AG04450 (cell line): ENCODE measurements at regions of chr11 and their contacts with region 1.

Region 1: DNA sequence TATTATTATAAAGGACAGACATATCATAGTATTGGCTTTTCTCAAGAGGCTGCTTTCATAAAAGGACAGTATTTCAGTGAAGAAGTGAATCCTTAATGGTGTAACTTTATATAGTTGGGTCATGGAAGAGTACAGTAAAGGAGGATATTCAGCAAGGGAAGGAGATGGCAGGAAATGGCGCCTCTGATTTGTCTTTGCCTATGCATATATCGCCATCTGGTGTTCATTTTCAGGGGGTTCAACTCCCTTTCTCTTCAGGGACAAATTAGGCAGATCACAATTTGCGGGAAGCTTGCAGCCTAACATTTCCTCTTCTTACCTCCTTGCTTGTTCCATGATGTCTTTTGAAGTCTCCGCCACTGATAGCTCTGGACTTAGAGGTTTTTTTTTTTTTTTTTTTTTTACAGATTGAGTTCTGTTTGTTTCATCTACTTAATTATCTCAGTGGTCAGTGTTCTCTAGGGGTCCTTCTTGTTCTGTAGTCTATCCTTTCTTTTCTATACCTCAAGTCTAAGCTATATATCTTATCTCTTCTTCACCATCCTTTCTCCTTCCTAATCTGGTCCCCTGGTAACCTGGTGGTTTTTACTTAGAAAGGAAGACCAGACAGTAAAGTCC is 21.8 kb upstream of the RRM1 start:
- DNase-seq: peak; percentile 52
- H3K4me3 ChIP-seq: no peak overlapping the region
- H3K27ac ChIP-seq: no peak overlapping the region
- H3K27me3 ChIP-seq: no peaks in the 10 kb centered on the region
- CTCF ChIP-seq: peak; percentile 91

Region 2: DNA sequence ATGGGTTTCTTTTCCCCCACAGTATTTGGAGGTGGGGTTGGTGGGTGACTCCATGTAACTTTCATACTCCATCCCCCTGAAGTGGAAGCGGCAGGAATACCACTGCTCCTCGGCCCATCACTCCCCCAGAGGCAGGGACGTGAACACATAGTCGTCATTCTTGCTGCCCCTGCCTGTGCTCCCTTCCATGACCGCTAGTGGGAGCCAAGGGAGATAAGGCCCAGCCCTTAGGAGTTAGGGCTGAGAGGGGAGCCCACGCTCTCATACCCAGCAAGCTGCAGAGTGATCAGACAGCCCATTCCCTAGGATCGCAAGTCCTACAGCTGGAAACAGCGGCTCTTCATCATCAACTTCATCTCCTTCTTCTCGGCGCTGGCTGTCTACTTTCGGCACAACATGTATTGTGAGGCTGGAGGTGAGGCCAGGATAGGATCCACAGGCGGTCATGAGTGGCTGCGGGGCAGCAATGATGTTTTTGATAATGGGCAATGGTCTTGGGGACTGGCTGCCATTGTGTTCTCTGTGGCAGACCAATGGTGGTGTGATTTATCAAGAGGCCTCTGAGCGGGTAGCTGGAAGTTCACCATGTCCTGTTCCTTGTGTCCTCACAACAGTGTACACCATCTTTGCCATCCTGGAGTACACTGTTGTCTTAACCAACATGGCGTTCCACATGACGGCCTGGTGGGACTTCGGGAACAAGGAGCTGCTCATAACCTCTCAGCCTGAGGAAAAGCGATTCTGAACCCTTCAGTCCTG is 247.9 kb before region 1 on chr11:
- CTCF ChIA-PET with region 1: interaction called, 15 read pairs
- POLR2A ChIA-PET with region 1: no interaction called
- DNase-seq: no peak
- H3K4me3 ChIP-seq: no peak overlapping the region
- H3K27ac ChIP-seq: peak overlapping the region; percentile 11
- H3K27me3 ChIP-seq: no peaks in the 10 kb centered on the region
- CTCF ChIP-seq: peak; percentile 53

Region 3: GRCh38 chr11:3873712-3874349 is 198.9 kb before region 1 on chr11:
- CTCF ChIA-PET with region 1: interaction called, 29 read pairs
- POLR2A ChIA-PET with region 1: no interaction called
- DNase-seq: no peak
- H3K4me3 ChIP-seq: no peak overlapping the region
- H3K27ac ChIP-seq: no peak overlapping the region
- H3K27me3 ChIP-seq: no peaks in the 10 kb centered on the region
- CTCF ChIP-seq: no peak

Region 4: GRCh38 chr11:3971756-3972404 is 100.9 kb before region 1 on chr11:
- CTCF ChIA-PET with region 1: interaction called, 14 read pairs
- POLR2A ChIA-PET with region 1: no interaction called
- DNase-seq: no peak
- H3K4me3 ChIP-seq: no peak overlapping the region
- H3K27ac ChIP-seq: no peak overlapping the region
- H3K27me3 ChIP-seq: no peaks in the 10 kb centered on the region
- CTCF ChIP-seq: peak; percentile 33

Region 5: GRCh38 chr11:4039011-4039410 is 33.8 kb before region 1 on chr11:
- CTCF ChIA-PET with region 1: interaction called, 38 read pairs
- POLR2A ChIA-PET with region 1: no interaction called
- DNase-seq: no peak
- H3K4me3 ChIP-seq: no peak overlapping the region
- H3K27ac ChIP-seq: no peak overlapping the region
- H3K27me3 ChIP-seq: no peaks in the 10 kb centered on the region
- CTCF ChIP-seq: no peak

Region 6: GRCh38 chr11:4154503-4154902 is 81.7 kb after region 1 on chr11:
- CTCF ChIA-PET with region 1: no interaction called
- POLR2A ChIA-PET with region 1: no interaction called
- DNase-seq: no peak
- H3K4me3 ChIP-seq: no peak overlapping the region
- H3K27ac ChIP-seq: no peak overlapping the region
- H3K27me3 ChIP-seq: no peaks in the 10 kb centered on the region
- CTCF ChIP-seq: no peak